RWPE1 (cell line): ENCODE measurements at regions of chr16 and their contacts with region 1.

Region 1: GRCh38 chr16:82302042-82302727 is 132.2 kb upstream of the MPHOSPH6 start:
- DNase-seq: no peak
- H3K27ac ChIP-seq: no peak overlapping the region
- CTCF ChIP-seq: no peak

Region 2: GRCh38 chr16:82263521-82264143 is 38.6 kb before region 1 on chr16:
- CTCF ChIA-PET with region 1: no interaction called
- POLR2A ChIA-PET with region 1: no interaction called
- DNase-seq: peak; percentile 66
- H3K27ac ChIP-seq: no peak overlapping the region
- CTCF ChIP-seq: peak; percentile 90

Region 3: DNA sequence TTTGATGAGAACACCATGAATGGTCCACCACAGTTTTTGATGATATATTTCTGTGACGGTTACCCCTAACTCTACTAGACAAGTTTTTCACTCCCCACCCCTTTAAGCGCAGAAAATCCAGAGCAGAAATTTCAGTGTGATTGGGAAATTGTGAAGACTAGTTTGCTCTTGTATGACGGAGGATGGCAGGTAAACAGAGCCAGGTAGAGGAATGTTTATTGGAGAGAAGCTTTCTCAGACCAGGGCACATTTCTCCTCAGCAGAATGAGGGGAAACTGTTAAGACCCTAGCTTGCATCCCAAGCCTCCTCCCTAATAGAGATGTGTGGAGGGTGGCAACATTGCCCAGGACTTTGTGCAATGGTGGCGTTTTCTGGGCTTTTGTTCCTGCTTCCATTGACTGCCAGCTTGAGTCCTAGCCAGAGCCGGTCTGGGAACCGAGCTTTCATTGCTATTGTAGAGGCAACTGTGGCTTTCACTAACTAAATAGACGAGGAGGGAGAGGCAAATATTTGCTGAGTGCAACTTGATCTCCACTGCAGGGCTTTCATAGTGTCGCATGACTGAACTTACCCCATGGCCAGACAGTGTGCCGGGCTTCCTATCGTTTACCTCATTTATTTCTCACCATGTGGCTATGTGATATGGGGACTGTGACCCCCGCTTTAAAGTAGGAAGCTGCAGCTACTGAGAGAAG is 27.4 kb after region 1 on chr16:
- CTCF ChIA-PET with region 1: interaction called, 11 read pairs
- POLR2A ChIA-PET with region 1: no interaction called
- DNase-seq: no peak
- H3K27ac ChIP-seq: no peak overlapping the region
- CTCF ChIP-seq: no peak

Region 4: DNA sequence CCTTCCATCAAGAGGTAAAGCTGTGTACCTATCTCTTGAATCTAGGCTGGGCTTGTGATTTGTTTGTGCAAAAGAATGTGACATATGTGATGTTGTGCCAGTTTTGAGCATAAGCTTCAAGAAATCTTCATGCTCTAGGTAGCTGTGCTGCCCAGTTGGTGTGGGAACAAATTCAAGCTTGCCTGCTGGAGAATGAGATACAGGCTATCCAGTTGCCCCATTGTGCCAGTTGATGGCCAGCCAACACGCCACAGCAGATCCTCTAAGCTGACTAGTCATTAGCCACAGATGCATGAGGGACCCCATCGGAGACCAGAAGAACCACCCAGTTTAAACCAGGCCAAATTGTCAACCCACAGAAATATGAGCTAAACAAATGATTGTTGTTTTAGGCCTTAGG is 48.4 kb after region 1 on chr16:
- CTCF ChIA-PET with region 1: no interaction called
- POLR2A ChIA-PET with region 1: no interaction called
- DNase-seq: no peak
- H3K27ac ChIP-seq: no peak overlapping the region
- CTCF ChIP-seq: no peak